B cell (primary cell): ENCODE measurements at regions of chr16 and their contacts with region 1.

Region 1: GRCh38 chr16:11431915-11432465 is 86.7 kb downstream of the RMI2 start:
- DNase-seq: no peak
- ATAC-seq: no peak
- H3K4me3 ChIP-seq: no peak overlapping the region
- H3K4me3 Mint-ChIP-seq: no peak overlapping the region
- H3K27ac ChIP-seq: no peak overlapping the region
- H3K27ac Mint-ChIP-seq: no peak overlapping the region
- H3K4me1 ChIP-seq: no peaks in the 10 kb centered on the region
- H3K4me1 Mint-ChIP-seq: no peaks in the 10 kb centered on the region
- H3K27me3 ChIP-seq: peaks cover 0 to 5% (median 2%) of the 10 kb centered on the region in 4 experiments
- H3K27me3 Mint-ChIP-seq: no peaks in the 10 kb centered on the region
- CTCF ChIP-seq: no peak

Region 2: GRCh38 chr16:11484691-11485258 is 52.8 kb after region 1 on chr16:
- CTCF ChIA-PET with region 1: interaction called, 3 read pairs
- POLR2A ChIA-PET with region 1: no interaction called
- intact Hi-C with region 1: loop called (anchors 10 kb)
- DNase-seq: no peak
- ATAC-seq: no peak
- H3K4me3 ChIP-seq: no peak overlapping the region
- H3K4me3 Mint-ChIP-seq: no peak overlapping the region
- H3K27ac ChIP-seq: no peak overlapping the region
- H3K27ac Mint-ChIP-seq: no peak overlapping the region
- H3K4me1 ChIP-seq: no peaks in the 10 kb centered on the region
- H3K4me1 Mint-ChIP-seq: no peaks in the 10 kb centered on the region
- H3K27me3 ChIP-seq: no peaks in the 10 kb centered on the region
- H3K27me3 Mint-ChIP-seq: no peaks in the 10 kb centered on the region
- CTCF ChIP-seq: no peak